Ovary (tissue), 10 donors: ENCODE measurements at regions of chr19 and their contacts with region 1.

Region 1: GRCh38 chr19:31349160-31349881 is at the start of gene TSHZ3:
- DNase-seq: peak; percentile 89 to 94 (median 91)
- H3K4me3 ChIP-seq: peak within 1 kb of the TSS; percentile 61
- H3K27ac ChIP-seq: peak within 1 kb of the TSS; percentile 95 to 98
- H3K4me1 ChIP-seq: peaks cover 14% of the 10 kb centered on the region
- H3K27me3 ChIP-seq: no peaks in the 10 kb centered on the region
- CTCF ChIP-seq: no peak
- EP300 ChIP-seq: no peak
- POLR2A ChIP-seq: peak; percentile 39
- total RNA-seq, gene TSHZ3: 24.8 to 107 (median 76.2) TPM

Region 2: DNA sequence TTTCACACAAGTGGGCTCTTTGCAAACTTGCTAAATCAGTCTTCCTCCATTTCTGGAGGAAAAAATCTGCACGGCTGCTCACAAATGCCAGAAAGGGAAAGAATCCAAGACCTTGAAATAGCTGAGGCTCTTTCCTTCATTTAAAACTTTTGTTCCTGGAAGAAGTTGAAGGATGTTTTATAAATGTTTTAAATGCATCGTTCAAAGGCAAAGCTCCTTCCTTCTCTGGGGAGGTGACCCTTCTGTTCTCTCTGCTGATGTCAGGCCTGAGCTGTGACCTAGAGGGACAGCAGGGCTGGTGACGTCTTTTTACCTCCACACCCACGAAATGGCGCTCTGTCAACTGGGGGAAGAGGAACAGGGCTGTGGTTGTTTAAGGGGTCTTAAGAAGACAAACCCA is 619.7 kb after region 1 on chr19:
- intact Hi-C with region 1: loop called in 1 of 4 experiments (anchors 5 kb)
- DNase-seq: peak; percentile 49 to 72 (median 65)
- H3K4me3 ChIP-seq: no peak overlapping the region
- H3K27ac ChIP-seq: peak overlapping the region; percentile 2 to 88
- H3K4me1 ChIP-seq: peaks cover 13% of the 10 kb centered on the region
- H3K27me3 ChIP-seq: no peaks in the 10 kb centered on the region
- CTCF ChIP-seq: no peak
- EP300 ChIP-seq: no peak
- POLR2A ChIP-seq: no peak